Dendritic cell treated with granulocyte-macrophage colony-stimulating factor and Interleukin-4, amounts not matched to agents 40 ng/mL and 50 ng/mL, for 4 days (primary cell): ENCODE measurements at regions of chr6 and their contacts with region 1.

Region 1: GRCh38 chr6:146905181-146905704 is 299.0 kb upstream of the STXBP5 start:
- H3K4me3 Mint-ChIP-seq: no peak overlapping the region
- H3K27ac Mint-ChIP-seq: no peak overlapping the region
- H3K4me1 Mint-ChIP-seq: peaks cover 16% of the 10 kb centered on the region
- H3K27me3 Mint-ChIP-seq: no peaks in the 10 kb centered on the region

Region 2: DNA sequence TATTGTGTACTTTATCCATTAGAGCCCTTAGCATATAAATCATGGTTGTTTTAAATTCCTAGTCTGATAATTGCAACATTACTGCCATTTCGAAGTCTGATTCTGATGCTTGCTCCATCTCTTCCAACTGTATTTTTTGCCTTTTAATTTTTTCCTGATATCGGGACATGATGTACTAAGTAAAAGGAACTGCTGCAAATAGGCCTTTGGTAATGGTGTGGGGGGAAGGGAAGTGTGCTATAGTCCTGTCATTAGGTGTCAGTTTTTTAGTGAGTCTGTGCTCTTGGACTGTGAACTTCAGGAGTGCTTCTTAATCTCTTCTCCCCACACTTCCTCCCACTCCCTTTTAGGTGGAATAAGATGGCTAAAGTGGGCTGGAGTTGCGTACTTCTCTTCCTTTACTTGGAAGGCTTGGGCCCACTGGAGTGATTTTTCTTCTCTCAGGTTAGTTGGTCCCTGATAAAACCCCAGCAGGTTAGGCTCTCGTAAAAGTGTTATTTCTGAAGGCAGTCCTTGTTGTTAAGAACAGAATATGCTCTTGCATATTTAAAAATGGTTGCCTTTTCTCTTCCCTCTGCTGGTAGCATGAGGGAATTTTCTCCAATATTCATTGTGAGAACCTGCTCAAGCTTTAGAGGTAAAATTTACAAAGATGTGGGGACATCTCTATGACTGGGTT is 317.1 kb after region 1 on chr6:
- intact Hi-C with region 1: loop called (anchors 10 kb)
- H3K4me3 Mint-ChIP-seq: no peak overlapping the region
- H3K27ac Mint-ChIP-seq: no peak overlapping the region
- H3K4me1 Mint-ChIP-seq: peaks cover 44% of the 10 kb centered on the region
- H3K27me3 Mint-ChIP-seq: no peaks in the 10 kb centered on the region

Region 3: GRCh38 chr6:147285087-147285855 is 380.0 kb after region 1 on chr6:
- intact Hi-C with region 1: loop called (anchors 5 kb)
- H3K4me3 Mint-ChIP-seq: no peak overlapping the region
- H3K27ac Mint-ChIP-seq: peak overlapping the region; percentile 62
- H3K4me1 Mint-ChIP-seq: peaks cover 24% of the 10 kb centered on the region
- H3K27me3 Mint-ChIP-seq: no peaks in the 10 kb centered on the region

Region 4: DNA sequence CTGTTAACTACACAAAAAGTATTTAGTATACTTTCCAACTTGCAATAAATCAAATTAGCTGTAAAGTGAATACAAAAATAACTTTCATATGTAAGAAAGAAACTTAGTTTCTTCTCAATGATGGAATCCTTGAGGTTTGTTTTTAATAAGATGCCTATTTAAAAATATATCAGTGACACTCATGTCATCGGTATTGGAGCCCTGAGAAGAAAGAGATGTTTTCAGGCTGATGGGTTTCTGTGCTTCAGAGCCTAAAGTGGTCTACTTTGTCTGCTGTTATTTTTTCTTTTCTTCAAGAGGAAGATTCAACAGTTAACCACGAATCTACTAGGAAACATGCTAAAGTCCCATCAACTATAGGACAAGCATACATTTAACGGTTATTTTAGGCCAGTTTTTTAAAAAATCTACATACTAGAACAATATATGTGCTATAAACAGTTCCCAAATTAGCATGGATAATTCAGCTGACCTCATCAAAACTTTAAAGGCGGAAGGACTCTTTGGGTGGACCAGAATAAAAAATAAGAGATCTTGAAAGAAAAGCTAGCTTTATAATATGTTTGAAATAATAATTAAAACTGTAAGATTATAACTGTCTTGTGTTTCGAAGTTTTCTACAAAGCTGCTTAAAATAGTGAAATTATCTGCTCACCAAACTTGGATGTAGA is 456.2 kb after region 1 on chr6:
- intact Hi-C with region 1: loop called (anchors 10 kb)
- H3K4me3 Mint-ChIP-seq: no peak overlapping the region
- H3K27ac Mint-ChIP-seq: no peak overlapping the region
- H3K4me1 Mint-ChIP-seq: no peaks in the 10 kb centered on the region
- H3K27me3 Mint-ChIP-seq: no peaks in the 10 kb centered on the region